Posterior vena cava (tissue), 2 donors: ENCODE measurements at regions of chr5 and their contacts with region 1.

Region 1: GRCh38 chr5:76867827-76868693 is 18.2 kb downstream of the S100Z start:
- DNase-seq: no peak

Region 2: DNA sequence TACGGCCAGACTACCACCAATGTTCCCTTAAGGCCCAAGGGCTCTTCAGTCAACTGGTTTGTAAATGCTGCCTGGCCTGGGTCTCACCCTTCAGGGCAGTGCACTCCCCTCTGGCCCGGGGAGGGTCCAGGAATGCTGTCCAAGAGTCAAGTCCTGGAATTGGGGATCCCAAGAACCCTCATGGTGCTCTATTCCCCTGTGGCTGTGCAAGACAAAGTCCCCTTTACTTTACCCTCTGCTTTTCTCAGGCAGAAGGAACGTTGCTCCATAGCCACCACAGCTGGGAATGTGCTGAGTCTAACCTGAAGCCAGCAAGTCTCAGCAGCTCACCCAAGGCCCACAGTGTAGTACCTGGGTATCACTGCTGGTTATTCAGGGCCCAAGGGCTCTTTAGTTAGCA is 33.5 kb after region 1 on chr5:
- intact Hi-C with region 1: no loop called
- DNase-seq: no peak

Region 3: GRCh38 chr5:77015938-77016569 is 148.0 kb after region 1 on chr5:
- intact Hi-C with region 1: loop called in 1 of 2 experiments (anchors 2 kb)
- DNase-seq: no peak

Region 4: DNA sequence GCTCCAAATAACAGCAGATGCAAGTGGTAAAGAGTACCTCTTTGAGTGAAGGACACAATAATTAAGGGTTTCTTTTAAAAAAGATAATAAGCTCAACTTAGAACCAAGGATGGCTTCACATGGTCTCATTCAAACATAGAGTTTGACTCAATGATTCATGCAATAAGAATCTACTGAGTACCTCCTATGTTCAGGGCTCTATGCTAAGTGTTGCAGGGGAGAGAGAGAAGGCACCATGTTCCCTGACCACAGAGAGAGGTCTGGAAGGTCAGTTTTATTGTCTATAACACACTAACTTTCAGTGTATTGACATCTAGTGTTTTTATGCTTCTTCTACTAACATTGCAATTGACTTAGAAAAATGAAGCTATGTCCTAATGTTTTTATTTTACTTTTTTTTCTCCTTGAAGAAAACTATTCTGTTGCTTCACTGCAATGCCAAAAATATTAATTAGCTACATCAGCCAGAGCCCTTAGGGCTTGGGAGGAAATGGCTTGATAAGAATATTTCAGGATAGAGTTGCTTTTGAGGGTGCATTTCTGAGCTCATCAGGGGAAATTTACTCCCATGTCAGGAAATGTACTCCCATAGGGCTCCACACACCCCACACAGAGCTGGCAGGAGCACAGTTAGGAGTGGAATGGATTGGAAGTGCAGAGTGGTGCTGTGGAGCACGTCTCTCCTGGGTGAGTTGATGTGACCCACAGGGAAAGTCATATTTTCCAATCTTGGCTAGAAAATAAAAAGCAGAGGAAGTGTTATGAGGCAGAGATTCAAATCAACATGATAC is 449.0 kb after region 1 on chr5:
- intact Hi-C with region 1: no loop called
- DNase-seq: no peak